PC-3 (cell line): ENCODE measurements at regions of chr19 and their contacts with region 1.

Region 1: GRCh38 chr19:10644260-10645007 is 9.7 kb upstream of the ILF3 start:
- DNase-seq: peak; percentile 83
- ATAC-seq: peak; percentile 98
- H3K4me3 ChIP-seq: no peak overlapping the region
- H3K27ac ChIP-seq: no peak overlapping the region
- H3K4me1 ChIP-seq: no peaks in the 10 kb centered on the region
- H3K27me3 ChIP-seq: no peaks in the 10 kb centered on the region
- CTCF ChIP-seq: peak; percentile 92

Region 2: DNA sequence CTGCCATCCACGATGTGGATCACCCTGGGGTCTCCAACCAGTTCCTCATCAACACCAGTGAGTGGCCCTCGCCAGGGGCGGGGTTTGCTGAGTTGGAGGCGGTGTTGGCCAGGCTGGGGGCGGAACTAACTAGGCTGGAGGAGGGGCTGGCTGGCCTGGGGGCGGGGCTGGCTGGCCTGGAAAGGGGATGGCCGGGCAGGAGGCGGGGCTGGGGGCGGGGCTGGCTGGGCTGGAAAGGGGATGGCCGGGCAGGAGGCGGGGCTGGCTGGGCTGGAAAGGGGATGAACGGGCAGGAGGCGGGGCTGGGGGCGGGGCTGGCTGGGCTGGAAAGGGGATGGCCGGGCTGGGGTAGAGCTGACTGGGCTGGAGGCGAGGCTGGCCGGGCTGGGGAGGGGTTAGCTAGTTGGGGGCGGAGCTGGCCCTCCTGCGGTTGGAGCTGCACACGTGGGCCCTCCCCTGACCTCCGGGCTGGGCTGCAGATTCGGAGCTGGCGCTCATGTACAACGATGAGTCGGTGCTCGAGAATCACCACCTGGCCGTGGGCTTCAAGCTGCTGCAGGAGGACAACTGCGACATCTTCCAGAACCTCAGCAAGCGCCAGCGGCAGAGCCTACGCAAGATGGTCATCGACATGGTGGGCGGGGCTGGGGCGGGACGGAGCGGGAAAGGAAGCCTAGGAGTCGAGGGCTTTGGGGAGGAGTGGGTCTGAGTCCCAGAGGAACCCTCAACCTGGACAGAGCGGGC is 183.2 kb before region 1 on chr19:
- CTCF ChIA-PET with region 1: interaction called, 10 read pairs
- POLR2A ChIA-PET with region 1: no interaction called
- intact Hi-C with region 1: no loop called
- DNase-seq: peak; percentile 94
- ATAC-seq: peak; percentile 100
- H3K4me3 ChIP-seq: peak overlapping the region; percentile 47; the same call in 1 of the 2 replicates
- H3K27ac ChIP-seq: no peak overlapping the region
- H3K4me1 ChIP-seq: 0 out of 2 replicates have a peak, but pooled peaks cover 5% of the 10 kb centered on the region
- H3K27me3 ChIP-seq: no peaks in the 10 kb centered on the region
- CTCF ChIP-seq: no peak

Region 3: GRCh38 chr19:10568826-10569651 is 75.4 kb before region 1 on chr19 and contains the start of gene CDKN2D:
- CTCF ChIA-PET with region 1: no interaction called
- POLR2A ChIA-PET with region 1: no interaction called
- intact Hi-C with region 1: loop called (anchors 2 kb)
- DNase-seq: peak; percentile 100
- ATAC-seq: peak; percentile 87
- H3K4me3 ChIP-seq: peak within 1 kb of the TSS; percentile 72
- H3K27ac ChIP-seq: peak within 1 kb of the TSS; percentile 84
- H3K4me1 ChIP-seq: peaks cover 32% of the 10 kb centered on the region
- H3K27me3 ChIP-seq: no peaks in the 10 kb centered on the region
- CTCF ChIP-seq: no peak
- total RNA-seq, gene CDKN2D: 17.1 and 22.5 TPM in 2 replicates

Region 4: GRCh38 chr19:10580979-10581631 is 63.3 kb before region 1 on chr19:
- CTCF ChIA-PET with region 1: interaction called, 90 read pairs
- POLR2A ChIA-PET with region 1: no interaction called
- intact Hi-C with region 1: loop called (anchors 1 kb)
- DNase-seq: peak; percentile 98
- ATAC-seq: peak; percentile 91
- H3K4me3 ChIP-seq: no peak overlapping the region
- H3K27ac ChIP-seq: no peak overlapping the region
- H3K4me1 ChIP-seq: no peaks in the 10 kb centered on the region
- H3K27me3 ChIP-seq: no peaks in the 10 kb centered on the region
- CTCF ChIP-seq: peak; percentile 99

Region 5: GRCh38 chr19:10625003-10625776 is 19.2 kb before region 1 on chr19 and contains the start of gene SLC44A2:
- CTCF ChIA-PET with region 1: interaction called, 12 read pairs
- POLR2A ChIA-PET with region 1: no interaction called
- intact Hi-C with region 1: no loop called
- DNase-seq: peak; percentile 95
- ATAC-seq: peak; percentile 98
- H3K4me3 ChIP-seq: peak within 1 kb of the TSS; percentile 84
- H3K27ac ChIP-seq: peak within 1 kb of the TSS; percentile 38
- H3K4me1 ChIP-seq: peaks cover 21% of the 10 kb centered on the region
- H3K27me3 ChIP-seq: no peaks in the 10 kb centered on the region
- CTCF ChIP-seq: no peak
- total RNA-seq, gene SLC44A2: 63.9 and 87.3 TPM in 2 replicates